Activated naive CD4-positive, alpha-beta T cell treated with anti-CD3 and anti-CD28 coated beads for 36 hours (primary cell): ENCODE measurements at regions of chr2 and their contacts with region 1.

Region 1: DNA sequence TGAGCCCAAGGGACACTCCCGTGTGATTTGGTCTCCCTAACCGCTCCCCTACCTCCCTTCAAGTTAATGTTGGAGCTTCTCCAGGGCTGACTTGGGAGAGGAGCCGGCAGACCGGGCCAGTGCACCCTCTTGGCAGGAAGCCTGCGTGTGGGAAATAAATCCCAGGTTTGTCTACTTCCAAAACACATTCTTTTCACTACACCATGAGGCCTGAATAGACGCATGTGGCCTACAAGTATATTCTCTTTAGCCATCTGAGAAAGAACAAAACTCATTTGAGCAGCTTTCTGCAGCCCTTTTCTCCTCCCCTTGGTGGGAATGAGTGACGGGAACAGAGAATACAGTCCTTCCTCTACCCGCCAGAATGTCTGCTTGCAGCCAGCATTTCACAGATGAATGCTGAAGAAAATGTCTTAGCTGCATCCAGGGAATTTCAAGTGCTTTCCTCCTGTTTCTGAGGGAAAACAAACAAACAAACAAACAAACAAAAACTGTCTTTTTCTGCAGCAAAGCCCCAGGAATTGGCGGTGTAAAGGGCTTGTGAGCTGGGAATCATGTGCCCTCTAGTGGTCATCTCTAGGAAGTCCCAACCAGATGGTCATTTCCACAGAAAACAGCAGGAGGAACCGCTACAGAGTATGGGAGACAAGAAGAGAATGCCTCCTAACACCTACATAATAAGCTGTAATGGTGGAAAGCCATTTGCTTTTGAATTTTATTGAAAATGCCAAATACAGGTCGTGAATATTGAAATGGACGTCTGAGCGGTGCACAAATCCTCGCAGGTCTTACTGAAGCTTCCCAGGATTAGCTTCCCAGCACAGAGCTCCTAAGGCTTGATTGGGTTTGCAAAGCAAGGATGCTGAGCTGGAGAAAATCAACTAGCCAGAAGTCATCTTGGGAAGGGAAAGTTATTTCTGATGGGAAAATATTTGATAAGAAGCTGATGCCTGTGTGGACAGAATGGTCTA is 41.2 kb upstream of the DAPL1 start:
- DNase-seq: peak; percentile 42
- H3K4me3 Mint-ChIP-seq: no peak overlapping the region
- H3K27ac Mint-ChIP-seq: no peak overlapping the region
- H3K4me1 Mint-ChIP-seq: no peaks in the 10 kb centered on the region
- H3K27me3 Mint-ChIP-seq: peaks cover 3% of the 10 kb centered on the region

Region 2: DNA sequence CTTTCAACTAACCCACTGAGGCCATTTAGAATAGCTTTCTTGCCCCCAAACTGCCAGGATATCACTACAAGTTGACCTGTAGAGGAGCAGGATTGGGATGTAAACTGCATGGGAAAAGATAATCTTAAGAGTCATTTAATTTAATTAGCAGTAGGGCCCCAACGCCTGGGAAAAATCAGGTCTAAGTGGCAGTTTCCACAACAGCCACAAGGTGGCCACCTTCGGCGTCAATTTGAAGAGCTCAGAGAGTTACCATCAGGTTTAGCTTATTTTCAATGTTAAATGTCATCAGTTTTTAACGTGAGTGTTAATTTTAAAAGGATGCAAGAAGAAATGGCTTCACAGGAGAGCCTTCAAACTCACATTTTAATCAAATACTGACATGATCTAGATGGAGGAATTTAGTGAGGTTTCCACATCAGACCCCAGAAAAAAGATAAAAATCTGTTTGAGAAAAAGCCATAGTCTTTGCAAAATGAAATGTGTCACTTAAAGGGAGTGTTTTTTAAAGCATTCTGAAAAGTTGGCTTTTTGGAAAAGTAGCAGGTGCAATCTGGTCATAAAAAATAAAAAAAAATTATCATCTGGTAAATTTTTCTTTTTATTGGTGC is 729.5 kb before region 1 on chr2:
- CTCF ChIA-PET with region 1: interaction called, 38 read pairs
- intact Hi-C with region 1: loop called (anchors 1 kb)
- DNase-seq: peak; percentile 76
- H3K4me3 Mint-ChIP-seq: no peak overlapping the region
- H3K27ac Mint-ChIP-seq: no peak overlapping the region
- H3K4me1 Mint-ChIP-seq: peaks cover 7% of the 10 kb centered on the region
- H3K27me3 Mint-ChIP-seq: no peaks in the 10 kb centered on the region

Region 3: GRCh38 chr2:158034199-158034866 is 719.6 kb before region 1 on chr2:
- CTCF ChIA-PET with region 1: interaction called, 19 read pairs
- intact Hi-C with region 1: loop called (anchors 1 kb)
- DNase-seq: peak; percentile 37
- H3K4me3 Mint-ChIP-seq: no peak overlapping the region
- H3K27ac Mint-ChIP-seq: no peak overlapping the region
- H3K4me1 Mint-ChIP-seq: no peaks in the 10 kb centered on the region
- H3K27me3 Mint-ChIP-seq: peaks cover 6% of the 10 kb centered on the region

Region 4: DNA sequence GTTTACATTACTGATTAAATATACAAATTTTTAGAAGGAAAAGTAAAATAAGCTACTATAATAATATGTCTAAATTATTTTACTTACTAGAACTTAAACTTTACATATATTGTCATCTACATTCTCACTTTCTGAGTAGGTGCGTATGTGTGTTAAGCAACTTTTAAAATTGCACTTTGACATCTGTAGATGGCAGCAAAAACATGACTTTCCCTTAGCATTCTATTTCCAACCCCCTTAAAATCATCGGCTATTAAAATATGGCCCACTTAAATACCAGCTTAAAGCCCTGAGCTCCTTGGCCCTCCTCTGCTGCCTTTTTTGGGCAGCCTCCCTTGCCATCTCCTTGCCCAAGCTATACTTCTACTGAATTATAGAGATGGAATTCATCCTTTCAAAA is 574.3 kb before region 1 on chr2:
- CTCF ChIA-PET with region 1: interaction called, 20 read pairs
- intact Hi-C with region 1: loop called (anchors 1 kb)
- DNase-seq: no peak
- H3K4me3 Mint-ChIP-seq: no peak overlapping the region
- H3K27ac Mint-ChIP-seq: no peak overlapping the region
- H3K4me1 Mint-ChIP-seq: no peaks in the 10 kb centered on the region
- H3K27me3 Mint-ChIP-seq: peaks cover 43% of the 10 kb centered on the region

Region 5: GRCh38 chr2:159118115-159118858 is 364.4 kb after region 1 on chr2:
- CTCF ChIA-PET with region 1: no interaction called
- intact Hi-C with region 1: loop called (anchors 1 kb)
- DNase-seq: peak; percentile 93
- H3K4me3 Mint-ChIP-seq: no peak overlapping the region
- H3K27ac Mint-ChIP-seq: no peak overlapping the region
- H3K4me1 Mint-ChIP-seq: peaks cover 4% of the 10 kb centered on the region
- H3K27me3 Mint-ChIP-seq: no peaks in the 10 kb centered on the region